PC-3 (cell line): ENCODE measurements at regions of chr2 and their contacts with region 1.

Region 1: GRCh38 chr2:212548450-212548819 is 9.8 kb upstream of the ERBB4 start:
- DNase-seq: peak; percentile 68
- ATAC-seq: peak; percentile 71
- H3K4me3 ChIP-seq: no peak overlapping the region
- H3K27ac ChIP-seq: no peak overlapping the region
- H3K4me1 ChIP-seq: no peaks in the 10 kb centered on the region
- H3K27me3 ChIP-seq: peaks cover 10% of the 10 kb centered on the region; the same call in 1 of the 2 replicates
- CTCF ChIP-seq: peak; percentile 68

Region 2: DNA sequence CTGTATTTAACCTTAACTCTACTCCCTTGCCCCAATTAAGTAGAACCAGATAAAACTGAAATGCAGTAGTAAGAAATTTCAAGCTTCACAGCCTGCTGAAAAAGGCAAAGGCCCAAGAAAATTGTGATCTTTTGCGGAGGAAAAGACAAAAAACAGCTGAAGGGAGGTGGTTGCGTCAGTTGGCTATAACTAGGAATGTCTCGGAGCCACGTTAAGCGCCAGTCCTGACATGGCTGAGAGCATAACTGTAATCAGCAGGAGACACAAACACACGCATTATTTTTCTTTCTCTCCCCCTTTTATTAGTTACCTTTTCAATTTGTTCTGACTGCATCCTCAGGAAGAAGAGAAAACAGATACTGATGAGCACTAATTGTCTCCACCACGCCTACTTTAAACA is 622.5 kb before region 1 on chr2:
- CTCF ChIA-PET with region 1: no interaction called
- POLR2A ChIA-PET with region 1: no interaction called
- intact Hi-C with region 1: no loop called
- DNase-seq: no peak
- ATAC-seq: no peak
- H3K4me3 ChIP-seq: no peak overlapping the region
- H3K27ac ChIP-seq: no peak overlapping the region
- H3K4me1 ChIP-seq: no peaks in the 10 kb centered on the region
- H3K27me3 ChIP-seq: no peaks in the 10 kb centered on the region
- CTCF ChIP-seq: no peak

Region 3: DNA sequence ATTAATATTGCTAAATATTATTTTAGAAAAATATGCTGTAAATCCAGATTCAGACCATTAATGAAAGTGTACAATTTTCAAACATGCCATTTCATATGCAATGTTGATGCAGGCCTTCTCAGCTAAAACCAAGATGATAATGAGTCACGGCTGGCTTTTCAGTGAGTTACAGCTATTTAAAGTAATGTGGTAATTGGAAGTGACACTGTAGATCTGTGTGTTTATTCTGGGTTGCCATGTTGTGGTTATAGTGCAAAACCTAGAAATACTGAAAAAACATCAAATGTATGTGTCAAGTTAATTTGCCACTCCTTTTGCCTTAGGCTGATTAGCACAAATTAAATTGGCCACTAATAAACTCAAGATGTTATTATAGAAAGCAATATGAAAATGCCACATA is 516.4 kb before region 1 on chr2:
- CTCF ChIA-PET with region 1: no interaction called
- POLR2A ChIA-PET with region 1: no interaction called
- intact Hi-C with region 1: loop called (anchors 5 kb)
- DNase-seq: peak; percentile 13
- ATAC-seq: peak; percentile 40; the same call in 1 of the 2 replicates
- H3K4me3 ChIP-seq: no peak overlapping the region
- H3K27ac ChIP-seq: no peak overlapping the region
- H3K4me1 ChIP-seq: no peaks in the 10 kb centered on the region
- H3K27me3 ChIP-seq: no peaks in the 10 kb centered on the region; the same call in 1 of the 2 replicates
- CTCF ChIP-seq: no peak

Region 4: DNA sequence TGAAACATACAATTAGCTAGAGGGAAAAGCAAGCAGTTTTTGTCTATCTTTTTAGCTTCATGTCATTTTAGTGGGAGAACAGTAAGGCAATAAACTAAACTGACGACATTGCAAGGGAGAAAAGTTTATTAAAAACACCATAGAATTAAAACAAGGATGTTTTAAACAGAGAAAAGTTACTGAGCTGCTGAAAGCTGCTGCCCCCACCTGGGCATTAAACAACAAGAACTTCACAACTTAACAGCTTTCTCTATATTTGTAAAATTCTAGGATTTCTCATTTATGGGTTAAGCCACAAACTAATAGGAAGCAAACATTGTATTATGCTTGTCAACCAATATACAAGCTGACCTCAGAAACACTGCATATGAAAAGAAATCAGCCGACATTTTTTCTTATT is 299.0 kb before region 1 on chr2:
- CTCF ChIA-PET with region 1: no interaction called
- POLR2A ChIA-PET with region 1: no interaction called
- intact Hi-C with region 1: no loop called
- DNase-seq: peak; percentile 5
- ATAC-seq: no peak; the same call in 1 of the 2 replicates
- H3K4me3 ChIP-seq: no peak overlapping the region
- H3K27ac ChIP-seq: no peak overlapping the region
- H3K4me1 ChIP-seq: no peaks in the 10 kb centered on the region
- H3K27me3 ChIP-seq: no peaks in the 10 kb centered on the region; the same call in 1 of the 2 replicates
- CTCF ChIP-seq: peak; percentile 60

Region 5: DNA sequence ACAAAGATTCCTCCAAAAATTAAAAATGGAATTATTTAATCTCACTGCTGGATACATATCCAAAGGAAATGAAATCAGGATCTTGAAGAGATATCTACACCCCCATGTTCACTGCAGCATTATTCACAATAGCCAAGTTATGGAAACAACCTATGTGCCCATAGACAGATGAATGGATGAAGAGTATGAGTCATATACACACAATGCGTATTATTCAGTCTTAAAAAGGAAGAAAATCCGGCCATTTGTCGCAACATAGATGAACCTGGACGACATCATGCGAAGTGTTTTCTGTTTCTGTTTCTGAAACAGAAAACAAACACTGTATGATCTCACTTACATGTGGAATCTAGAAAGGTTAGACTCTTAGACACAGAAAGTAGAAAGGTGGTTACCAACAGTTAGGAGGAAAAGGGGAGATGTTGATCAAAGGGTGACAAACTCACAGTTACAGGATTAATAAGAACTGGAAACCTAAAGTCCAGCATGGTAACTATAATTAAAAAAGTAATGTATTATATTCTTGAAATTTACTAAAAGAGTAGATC is 78.0 kb after region 1 on chr2:
- CTCF ChIA-PET with region 1: no interaction called
- POLR2A ChIA-PET with region 1: no interaction called
- intact Hi-C with region 1: no loop called
- DNase-seq: no peak
- ATAC-seq: no peak
- H3K4me3 ChIP-seq: no peak overlapping the region
- H3K27ac ChIP-seq: no peak overlapping the region
- H3K4me1 ChIP-seq: no peaks in the 10 kb centered on the region
- H3K27me3 ChIP-seq: no peaks in the 10 kb centered on the region
- CTCF ChIP-seq: no peak